H1 (cell line): ENCODE measurements at regions of chr10 and their contacts with region 1.

Region 1: GRCh38 chr10:132407814-132408278 is 10.8 kb downstream of the PWWP2B start:
- DNase-seq: peak in 1 of 2 experiments; percentile 91
- H3K4me3 ChIP-seq: peak overlapping the region in 3 of 4 experiments; percentile 11 to 45 (median 18); a peak in 3 of 8 replicates
- H3K27ac ChIP-seq: peak overlapping the region; percentile 82
- H3K4me1 ChIP-seq: peaks cover 3 to 51% (median 40%) of the 10 kb centered on the region in 4 experiments
- H3K27me3 ChIP-seq: no peaks in the 10 kb centered on the region
- CTCF ChIP-seq: no peak
- EP300 ChIP-seq: peak in 1 of 2 experiments; percentile 98; a peak in 2 of 3 replicates
- POLR2A ChIP-seq: peak in 1 of 2 experiments; percentile 65; a peak in 2 of 3 replicates
- RAD21 ChIP-seq: peak; percentile 8 to 18; a peak in 2 of 4 replicates

Region 2: DNA sequence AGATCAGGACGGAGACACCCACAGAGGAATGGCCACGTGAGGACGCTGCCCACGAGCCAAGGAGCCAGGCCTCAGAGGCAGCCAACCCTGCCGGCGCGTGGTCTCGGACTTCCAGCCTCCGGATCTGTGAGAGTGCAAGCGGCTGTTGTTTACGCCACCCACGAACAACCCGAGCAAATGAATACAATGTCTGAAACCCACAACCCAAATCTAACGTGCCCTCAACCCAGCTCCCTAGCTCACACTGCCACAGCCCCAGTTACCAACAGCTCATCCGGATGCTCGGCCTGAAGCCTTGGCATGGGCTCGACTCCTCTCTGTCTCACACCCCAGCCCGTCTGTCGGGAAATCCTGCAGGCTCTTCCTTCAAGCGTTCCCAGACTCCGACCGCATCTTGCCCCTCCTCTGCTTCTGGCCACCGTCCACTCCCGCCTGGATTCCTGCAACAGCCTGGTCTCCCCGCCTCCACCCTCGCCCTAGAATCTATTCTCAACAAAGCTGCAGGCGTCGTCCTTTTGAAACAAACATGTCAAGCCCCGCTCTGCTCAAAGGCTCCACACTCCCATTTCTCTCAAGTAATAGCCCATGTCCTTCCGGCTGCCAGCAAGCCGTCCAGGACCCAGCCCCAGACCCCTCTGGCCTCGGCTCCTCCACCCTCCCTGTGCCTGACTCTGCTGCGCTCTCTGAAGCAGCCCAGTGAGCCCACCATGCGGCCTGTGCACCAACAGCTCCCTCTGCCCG is 135.4 kb before region 1 on chr10:
- CTCF ChIA-PET with region 1: no interaction called
- POLR2A ChIA-PET with region 1: no interaction called
- DNase-seq: no peak
- H3K4me3 ChIP-seq: no peak overlapping the region
- H3K27ac ChIP-seq: no peak overlapping the region
- H3K4me1 ChIP-seq: no peaks in the 10 kb centered on the region; a peak in 1 of 7 replicates
- H3K27me3 ChIP-seq: no peaks in the 10 kb centered on the region; a peak in 1 of 7 replicates
- CTCF ChIP-seq: no peak
- EP300 ChIP-seq: no peak
- POLR2A ChIP-seq: no peak
- RAD21 ChIP-seq: no peak

Region 3: GRCh38 chr10:132387764-132388210 is 20.1 kb before region 1 on chr10:
- CTCF ChIA-PET with region 1: interaction called, 5 read pairs
- POLR2A ChIA-PET with region 1: interaction called, 10 read pairs
- DNase-seq: peak in 1 of 2 experiments; percentile 98
- H3K4me3 ChIP-seq: peak overlapping the region in 2 of 4 experiments; percentile 9 to 41; a peak in 1 of 8 replicates
- H3K27ac ChIP-seq: no peak overlapping the region
- H3K4me1 ChIP-seq: peaks cover 0 to 12% (median 9%) of the 10 kb centered on the region in 4 experiments; a peak in 6 of 7 replicates
- H3K27me3 ChIP-seq: no peaks in the 10 kb centered on the region
- CTCF ChIP-seq: peak in 2 of 3 experiments; percentile 71 to 77; a peak in 3 of 4 replicates
- EP300 ChIP-seq: no peak
- POLR2A ChIP-seq: no peak
- RAD21 ChIP-seq: peak; percentile 68 to 76

Region 4: DNA sequence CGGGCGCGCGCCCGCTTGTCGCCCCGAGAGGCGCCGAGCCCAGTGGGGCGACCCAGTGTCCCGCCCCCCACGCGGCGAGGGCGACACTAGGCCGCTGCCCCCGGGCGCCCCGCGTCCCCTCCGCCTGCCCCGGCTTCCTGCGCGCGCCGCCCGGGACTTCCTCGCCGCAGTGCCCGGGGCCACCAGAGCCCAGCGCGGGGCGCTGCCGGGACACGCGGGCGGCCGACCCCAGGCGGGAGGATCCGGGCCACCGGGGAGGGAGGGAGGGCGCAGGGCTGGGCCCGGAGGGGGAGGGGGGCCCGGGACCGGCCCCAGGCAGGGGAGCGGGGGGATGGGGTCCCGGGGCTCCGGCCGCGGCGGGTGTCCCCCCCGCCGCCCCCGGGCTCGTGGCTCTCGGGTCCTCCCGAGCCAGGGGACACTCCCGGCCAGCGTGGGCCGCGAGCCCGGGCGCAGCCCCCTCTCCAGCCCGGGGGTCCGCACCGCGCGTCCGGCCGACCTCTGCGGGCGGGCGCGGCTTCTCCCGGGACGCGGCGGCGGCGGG is 11.3 kb before region 1 on chr10:
- CTCF ChIA-PET with region 1: interaction called, 7 read pairs
- POLR2A ChIA-PET with region 1: interaction called, 21 read pairs
- DNase-seq: no peak
- H3K4me3 ChIP-seq: peak overlapping the region; percentile 34 to 66 (median 37); a peak in 7 of 8 replicates
- H3K27ac ChIP-seq: no peak overlapping the region
- H3K4me1 ChIP-seq: peaks cover 0 to 26% (median 16%) of the 10 kb centered on the region in 4 experiments; a peak in 6 of 7 replicates
- H3K27me3 ChIP-seq: peaks cover 0 to 10% (median 2%) of the 10 kb centered on the region in 4 experiments; a peak in 4 of 7 replicates
- CTCF ChIP-seq: peak in 2 of 3 experiments; percentile 9 to 51; a peak in 3 of 4 replicates
- EP300 ChIP-seq: no peak
- POLR2A ChIP-seq: no peak
- RAD21 ChIP-seq: peak in 1 of 2 experiments; percentile 50; a peak in 2 of 4 replicates

Region 5: GRCh38 chr10:132421392-132421877 is 13.6 kb after region 1 on chr10:
- CTCF ChIA-PET with region 1: interaction called, 19 read pairs
- POLR2A ChIA-PET with region 1: interaction called, 71 read pairs
- DNase-seq: no peak
- H3K4me3 ChIP-seq: no peak overlapping the region
- H3K27ac ChIP-seq: 0 out of 2 replicates have a peak overlapping the region, but pooled peaks have one; percentile 48
- H3K4me1 ChIP-seq: peaks cover 9 to 36% (median 22%) of the 10 kb centered on the region in 4 experiments
- H3K27me3 ChIP-seq: no peaks in the 10 kb centered on the region
- CTCF ChIP-seq: no peak
- EP300 ChIP-seq: no peak
- POLR2A ChIP-seq: no peak
- RAD21 ChIP-seq: no peak

Region 6: GRCh38 chr10:132446661-132447194 is 38.9 kb after region 1 on chr10:
- CTCF ChIA-PET with region 1: interaction called, 13 read pairs
- POLR2A ChIA-PET with region 1: interaction called, 8 read pairs
- DNase-seq: no peak
- H3K4me3 ChIP-seq: no peak overlapping the region
- H3K27ac ChIP-seq: no peak overlapping the region; the same call in 1 of the 2 replicates
- H3K4me1 ChIP-seq: peaks cover 3 to 38% (median 27%) of the 10 kb centered on the region in 4 experiments
- H3K27me3 ChIP-seq: no peaks in the 10 kb centered on the region
- CTCF ChIP-seq: no peak
- EP300 ChIP-seq: no peak
- POLR2A ChIP-seq: no peak
- RAD21 ChIP-seq: no peak

Region 7: GRCh38 chr10:132452631-132453469 is 45.0 kb after region 1 on chr10:
- CTCF ChIA-PET with region 1: interaction called, 28 read pairs
- POLR2A ChIA-PET with region 1: interaction called, 3 read pairs
- DNase-seq: peak in 1 of 2 experiments; percentile 98
- H3K4me3 ChIP-seq: peak overlapping the region in 1 of 4 experiments; percentile 42; a peak in 3 of 8 replicates
- H3K27ac ChIP-seq: no peak overlapping the region
- H3K4me1 ChIP-seq: peaks cover 0 to 16% (median 12%) of the 10 kb centered on the region in 4 experiments; a peak in 6 of 7 replicates
- H3K27me3 ChIP-seq: peaks cover 0 to 2% (median 0%) of the 10 kb centered on the region in 4 experiments; a peak in 2 of 7 replicates
- CTCF ChIP-seq: peak in 2 of 3 experiments; percentile 72 to 96; a peak in 3 of 4 replicates
- EP300 ChIP-seq: 0 out of 3 replicates have a peak, but pooled peaks of 1 of the 2 experiments have one; percentile 40
- POLR2A ChIP-seq: no peak
- RAD21 ChIP-seq: peak; percentile 93 to 98

Region 8: DNA sequence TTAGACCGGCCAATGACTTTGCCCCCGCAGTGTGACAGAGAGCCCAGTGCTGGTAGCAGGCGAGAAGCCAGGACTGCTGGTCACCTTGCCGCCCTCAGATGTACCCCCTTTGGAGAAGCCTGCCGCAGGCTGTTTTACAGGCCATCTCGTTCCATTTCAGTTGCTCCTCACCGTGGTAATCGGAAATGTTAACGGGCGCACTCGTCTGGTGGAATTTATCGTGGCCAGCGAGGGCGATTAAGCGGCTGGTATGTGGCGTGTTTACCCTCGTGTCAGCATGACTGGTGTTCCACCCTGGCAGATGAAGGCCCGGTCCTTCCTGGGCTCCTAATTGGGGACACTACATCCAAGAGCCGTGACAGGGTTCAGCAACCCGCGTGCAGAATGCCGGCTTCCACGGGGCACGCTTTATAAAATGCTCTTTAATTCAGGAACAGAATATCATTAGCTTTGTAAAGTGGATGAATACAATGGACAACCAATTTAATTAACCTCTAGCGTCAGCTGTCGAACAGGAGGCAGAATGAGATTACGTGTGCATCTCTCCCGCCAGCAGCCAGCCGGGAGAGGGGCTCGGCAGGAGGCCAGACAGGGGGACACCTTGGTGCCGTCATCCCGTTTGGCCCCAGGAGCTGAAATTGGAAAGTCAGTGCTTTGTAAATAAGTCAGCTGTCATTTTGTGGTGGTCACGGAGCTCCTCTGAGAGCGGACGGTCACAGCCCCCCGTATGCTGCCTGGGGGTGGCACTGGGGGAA is 269.8 kb after region 1 on chr10:
- CTCF ChIA-PET with region 1: no interaction called
- POLR2A ChIA-PET with region 1: no interaction called
- DNase-seq: no peak
- H3K4me3 ChIP-seq: no peak overlapping the region
- H3K27ac ChIP-seq: no peak overlapping the region
- H3K4me1 ChIP-seq: no peaks in the 10 kb centered on the region
- H3K27me3 ChIP-seq: no peaks in the 10 kb centered on the region
- CTCF ChIP-seq: no peak
- EP300 ChIP-seq: no peak
- POLR2A ChIP-seq: no peak
- RAD21 ChIP-seq: no peak